ENCODE measurements at regions of chr7 and their contacts with region 1.

Region 1: GRCh38 chr7:87886875-87887274 is 10.6 kb downstream of the DBF4 start:
- DNase-seq: no peak
- ATAC-seq: no peak
- H3K4me3 ChIP-seq: no peak overlapping the region
- H3K27ac ChIP-seq: no peak overlapping the region
- H3K4me1 ChIP-seq: no peaks in the 10 kb centered on the region
- H3K27me3 ChIP-seq: no peaks in the 10 kb centered on the region

Region 2: GRCh38 chr7:87506246-87507180 is 380.4 kb before region 1 on chr7:
- intact Hi-C with region 1: loop called in 3 of 4 experiments (anchors 10 kb)
- DNase-seq: no peak
- ATAC-seq: peak; percentile 43 to 48
- H3K4me3 ChIP-seq: no peak overlapping the region
- H3K27ac ChIP-seq: no peak overlapping the region
- H3K4me1 ChIP-seq: no peaks in the 10 kb centered on the region
- H3K27me3 ChIP-seq: no peaks in the 10 kb centered on the region

Region 3: GRCh38 chr7:87797798-87798403 is 89.0 kb before region 1 on chr7:
- intact Hi-C with region 1: loop called in 1 of 4 experiments (anchors 5 kb)
- DNase-seq: no peak
- ATAC-seq: peak; percentile 38 to 41
- H3K4me3 ChIP-seq: no peak overlapping the region
- H3K27ac ChIP-seq: no peak overlapping the region
- H3K4me1 ChIP-seq: no peaks in the 10 kb centered on the region
- H3K27me3 ChIP-seq: no peaks in the 10 kb centered on the region

Region 4: DNA sequence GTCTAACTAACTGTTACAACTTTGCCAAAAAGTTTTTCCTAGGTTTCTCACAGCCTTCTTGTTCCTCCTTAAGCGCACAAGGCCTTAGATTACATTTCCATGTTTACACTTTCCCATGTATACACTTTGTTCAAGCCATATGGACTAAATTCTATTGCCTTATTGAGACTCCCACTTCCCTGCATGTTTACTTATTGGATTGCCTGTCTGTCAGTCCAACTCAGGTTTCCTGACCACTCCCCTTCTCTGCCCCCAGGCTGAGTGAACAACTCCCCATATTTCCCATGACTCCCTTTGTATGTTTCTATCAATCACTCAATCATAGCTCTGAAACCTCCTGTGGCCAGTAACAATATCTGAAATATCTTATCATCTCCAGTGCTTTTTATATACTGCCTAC is 53.7 kb before region 1 on chr7:
- intact Hi-C with region 1: no loop called
- DNase-seq: no peak
- ATAC-seq: no peak
- H3K4me3 ChIP-seq: no peak overlapping the region
- H3K27ac ChIP-seq: no peak overlapping the region
- H3K4me1 ChIP-seq: no peaks in the 10 kb centered on the region
- H3K27me3 ChIP-seq: no peaks in the 10 kb centered on the region

Region 5: GRCh38 chr7:87944531-87944930 is 57.7 kb after region 1 on chr7:
- intact Hi-C with region 1: no loop called
- DNase-seq: no peak
- ATAC-seq: no peak
- H3K4me3 ChIP-seq: no peak overlapping the region
- H3K27ac ChIP-seq: no peak overlapping the region
- H3K4me1 ChIP-seq: no peaks in the 10 kb centered on the region
- H3K27me3 ChIP-seq: no peaks in the 10 kb centered on the region

Measured in right cardiac atrium (tissue), 5 donors.